GM12878 (cell line): ENCODE measurements at regions of chr3 and their contacts with region 1.

Region 1: DNA sequence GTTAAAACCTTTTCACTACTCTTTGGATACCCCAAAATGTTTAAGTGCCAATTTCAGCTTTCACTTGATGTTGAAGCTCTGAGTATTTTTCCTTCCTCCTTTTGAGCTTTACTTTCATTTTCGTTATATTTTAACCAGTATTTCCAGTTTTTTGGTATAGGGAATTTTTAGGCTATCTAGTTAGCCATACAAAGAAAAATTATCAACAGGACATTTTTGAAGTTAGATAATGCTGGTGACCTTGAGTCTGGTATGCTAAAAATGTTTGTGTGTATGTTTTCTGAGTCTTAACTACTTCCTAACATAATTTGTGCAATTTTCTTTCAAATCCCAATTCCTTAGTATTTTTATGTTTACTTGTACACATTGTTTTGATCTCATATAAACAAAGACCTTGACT is 284.8 kb downstream of the OTOL1 start:
- DNase-seq: no peak
- ATAC-seq: no peak
- H3K4me3 ChIP-seq: no peak overlapping the region
- H3K27ac ChIP-seq: no peak overlapping the region
- H3K4me1 ChIP-seq: no peaks in the 10 kb centered on the region
- H3K27me3 ChIP-seq: no peaks in the 10 kb centered on the region
- CTCF ChIP-seq: no peak
- EP300 ChIP-seq: no peak
- POLR2A ChIP-seq: no peak
- RAD21 ChIP-seq: no peak

Region 2: GRCh38 chr3:161745741-161746140 is 35.6 kb before region 1 on chr3:
- CTCF ChIA-PET with region 1: no interaction called
- POLR2A ChIA-PET with region 1: no interaction called
- RAD21 ChIA-PET with region 1: no interaction called
- SMC1A ChIA-PET with region 1: no interaction called
- in situ Hi-C with region 1: no loop called
- intact Hi-C with region 1: no loop called
- DNase-seq: no peak
- ATAC-seq: no peak
- H3K4me3 ChIP-seq: no peak overlapping the region
- H3K27ac ChIP-seq: no peak overlapping the region
- H3K4me1 ChIP-seq: no peaks in the 10 kb centered on the region
- H3K27me3 ChIP-seq: no peaks in the 10 kb centered on the region
- CTCF ChIP-seq: no peak
- EP300 ChIP-seq: no peak
- POLR2A ChIP-seq: no peak
- RAD21 ChIP-seq: no peak

Region 3: GRCh38 chr3:161770484-161771386 is 10.7 kb before region 1 on chr3:
- CTCF ChIA-PET with region 1: interaction called, 3 read pairs
- POLR2A ChIA-PET with region 1: interaction called, 10 read pairs
- RAD21 ChIA-PET with region 1: interaction called, 10 read pairs
- SMC1A ChIA-PET with region 1: interaction called, 36 read pairs
- in situ Hi-C with region 1: no loop called
- intact Hi-C with region 1: no loop called
- DNase-seq: peak; percentile 69
- ATAC-seq: peak; percentile 91
- H3K4me3 ChIP-seq: no peak overlapping the region
- H3K27ac ChIP-seq: peak overlapping the region; percentile 46
- H3K4me1 ChIP-seq: peaks cover 6% of the 10 kb centered on the region
- H3K27me3 ChIP-seq: no peaks in the 10 kb centered on the region
- CTCF ChIP-seq: no peak
- EP300 ChIP-seq: peak; percentile 92 to 93
- POLR2A ChIP-seq: no peak
- RAD21 ChIP-seq: no peak